Caco-2 (cell line): ENCODE measurements at regions of chr22 and their contacts with region 1.

Region 1: GRCh38 chr22:31726692-31727091 is 23.2 kb downstream of the PRR14L start:
- DNase-seq: no peak
- H3K4me3 ChIP-seq: no peak overlapping the region
- H3K4me3 Mint-ChIP-seq: no peak overlapping the region
- H3K27ac Mint-ChIP-seq: no peak overlapping the region
- H3K4me1 ChIP-seq: peaks cover 11% of the 10 kb centered on the region
- H3K4me1 Mint-ChIP-seq: no peaks in the 10 kb centered on the region
- H3K27me3 ChIP-seq: no peaks in the 10 kb centered on the region
- H3K27me3 Mint-ChIP-seq: no peaks in the 10 kb centered on the region
- CTCF ChIP-seq: no peak

Region 2: GRCh38 chr22:31952459-31952858 is 225.8 kb after region 1 on chr22:
- CTCF ChIA-PET with region 1: interaction called, 10 read pairs
- POLR2A ChIA-PET with region 1: no interaction called
- intact Hi-C with region 1: no loop called
- DNase-seq: no peak
- H3K4me3 ChIP-seq: no peak overlapping the region
- H3K4me3 Mint-ChIP-seq: no peak overlapping the region
- H3K27ac Mint-ChIP-seq: no peak overlapping the region
- H3K4me1 ChIP-seq: no peaks in the 10 kb centered on the region; the same call in 1 of the 2 replicates
- H3K4me1 Mint-ChIP-seq: peaks cover 17% of the 10 kb centered on the region
- H3K27me3 ChIP-seq: no peaks in the 10 kb centered on the region
- H3K27me3 Mint-ChIP-seq: no peaks in the 10 kb centered on the region
- CTCF ChIP-seq: peak in 1 of 2 experiments; percentile 1